ENCODE measurements at regions of chr16 and their contacts with region 1.

Region 1: GRCh38 chr16:68085259-68086071 is at the start of gene NFATC3:
- DNase-seq: peak; percentile 99
- H3K4me3 Mint-ChIP-seq: peak within 1 kb of the TSS; percentile 81
- H3K27ac Mint-ChIP-seq: peak within 1 kb of the TSS; percentile 95
- H3K4me1 Mint-ChIP-seq: peaks cover 64% of the 10 kb centered on the region
- H3K27me3 Mint-ChIP-seq: no peaks in the 10 kb centered on the region
- total RNA-seq, gene NFATC3: 49.1 to 50.3 TPM

Region 2: GRCh38 chr16:67561824-67562525 is 523.5 kb before region 1 on chr16:
- CTCF ChIA-PET with region 1: no interaction called
- intact Hi-C with region 1: loop called (anchors 1 kb)
- DNase-seq: peak; percentile 98
- H3K4me3 Mint-ChIP-seq: peak overlapping the region; percentile 78
- H3K27ac Mint-ChIP-seq: peak overlapping the region; percentile 86
- H3K4me1 Mint-ChIP-seq: peaks cover 45% of the 10 kb centered on the region
- H3K27me3 Mint-ChIP-seq: no peaks in the 10 kb centered on the region

Region 3: GRCh38 chr16:67935402-67936123 is 149.9 kb before region 1 on chr16:
- CTCF ChIA-PET with region 1: interaction called, 3 read pairs
- intact Hi-C with region 1: loop called (anchors 5 kb)
- DNase-seq: peak; percentile 98
- H3K4me3 Mint-ChIP-seq: peak overlapping the region; percentile 100
- H3K27ac Mint-ChIP-seq: peak overlapping the region; percentile 94
- H3K4me1 Mint-ChIP-seq: peaks cover 41% of the 10 kb centered on the region
- H3K27me3 Mint-ChIP-seq: no peaks in the 10 kb centered on the region

Region 4: GRCh38 chr16:68022704-68023522 is 62.6 kb before region 1 on chr16 and contains the starts of genes DDX28 and DUS2:
- CTCF ChIA-PET with region 1: no interaction called
- intact Hi-C with region 1: no loop called
- DNase-seq: peak; percentile 96
- H3K4me3 Mint-ChIP-seq: peak within 1 kb of the TSS; percentile 99
- H3K27ac Mint-ChIP-seq: peak within 1 kb of the TSS; percentile 94
- H3K4me1 Mint-ChIP-seq: peaks cover 38% of the 10 kb centered on the region
- H3K27me3 Mint-ChIP-seq: no peaks in the 10 kb centered on the region
- total RNA-seq, gene DDX28: 9.4 to 9.7 TPM
- total RNA-seq, gene DUS2: 22.9 to 25.2 TPM

Region 5: DNA sequence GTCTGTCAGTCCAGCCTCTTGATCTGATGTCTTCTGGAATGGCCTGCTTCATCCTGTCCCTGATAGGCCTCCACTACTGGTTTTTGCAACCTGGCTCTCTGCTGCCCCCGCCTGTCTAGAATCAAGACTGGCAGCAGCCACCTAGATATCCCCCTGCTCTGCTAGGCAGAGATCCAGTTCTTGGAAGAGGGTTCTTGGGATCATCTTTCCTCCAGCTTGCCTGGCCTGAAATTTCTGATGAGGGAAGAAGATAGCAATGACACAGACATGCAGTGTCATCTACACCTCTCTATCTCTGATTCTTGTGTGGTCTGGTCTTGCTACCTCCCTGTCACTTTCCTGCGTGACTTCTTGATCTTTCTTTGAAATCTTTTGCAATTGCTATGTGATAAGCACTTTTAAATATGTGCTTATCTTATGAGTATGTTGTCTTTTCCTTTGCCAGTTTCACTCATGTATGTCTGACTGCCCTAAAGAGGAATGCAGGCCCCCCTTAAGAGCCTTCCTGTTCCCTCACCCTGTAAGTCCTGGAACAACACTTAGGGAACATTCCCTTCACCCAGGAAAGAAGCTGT is 20.6 kb before region 1 on chr16:
- CTCF ChIA-PET with region 1: interaction called, 13 read pairs
- intact Hi-C with region 1: no loop called
- DNase-seq: peak; percentile 88
- H3K4me3 Mint-ChIP-seq: no peak overlapping the region
- H3K27ac Mint-ChIP-seq: no peak overlapping the region
- H3K4me1 Mint-ChIP-seq: peaks cover 61% of the 10 kb centered on the region
- H3K27me3 Mint-ChIP-seq: no peaks in the 10 kb centered on the region

Region 6: DNA sequence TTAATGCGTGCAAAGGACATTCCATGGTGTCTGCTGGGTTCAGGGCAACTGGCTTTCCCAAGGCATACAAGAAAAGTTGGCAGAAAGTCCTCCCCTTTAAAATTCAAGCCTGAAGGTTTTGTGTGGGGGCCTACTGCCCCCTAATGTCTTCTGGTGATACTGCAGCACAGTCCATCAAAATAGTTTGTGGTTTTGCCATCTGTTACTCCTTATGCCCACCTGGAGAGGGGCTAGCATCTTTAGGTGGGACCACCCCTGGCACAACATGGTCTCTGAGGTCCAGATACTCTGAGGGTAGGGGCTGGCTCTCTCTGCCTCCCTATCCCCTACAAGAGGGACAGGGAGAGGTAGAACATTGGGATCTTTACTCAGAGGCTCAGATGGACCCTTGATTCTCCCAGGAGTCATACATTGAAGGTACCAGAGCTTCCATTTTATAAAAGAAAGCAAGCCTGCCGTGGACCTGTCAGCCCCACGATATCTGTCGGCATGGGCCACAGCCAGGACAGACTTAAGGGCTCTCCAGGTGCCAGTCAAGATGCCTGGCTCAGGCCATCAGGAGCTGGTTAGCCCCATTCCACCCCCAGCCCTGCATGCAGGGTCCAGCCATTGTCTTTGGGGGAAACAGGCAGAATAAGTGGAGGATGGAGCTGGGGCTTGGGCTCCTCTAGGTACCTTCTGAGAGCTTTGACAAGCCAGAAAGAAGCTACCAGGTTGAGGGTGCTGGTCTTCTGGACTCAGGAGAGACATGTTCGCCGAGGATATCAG is 144.2 kb after region 1 on chr16:
- CTCF ChIA-PET with region 1: interaction called, 11 read pairs
- intact Hi-C with region 1: no loop called
- DNase-seq: peak; percentile 64
- H3K4me3 Mint-ChIP-seq: no peak overlapping the region
- H3K27ac Mint-ChIP-seq: peak overlapping the region; percentile 53
- H3K4me1 Mint-ChIP-seq: peaks cover 42% of the 10 kb centered on the region
- H3K27me3 Mint-ChIP-seq: no peaks in the 10 kb centered on the region

Region 7: DNA sequence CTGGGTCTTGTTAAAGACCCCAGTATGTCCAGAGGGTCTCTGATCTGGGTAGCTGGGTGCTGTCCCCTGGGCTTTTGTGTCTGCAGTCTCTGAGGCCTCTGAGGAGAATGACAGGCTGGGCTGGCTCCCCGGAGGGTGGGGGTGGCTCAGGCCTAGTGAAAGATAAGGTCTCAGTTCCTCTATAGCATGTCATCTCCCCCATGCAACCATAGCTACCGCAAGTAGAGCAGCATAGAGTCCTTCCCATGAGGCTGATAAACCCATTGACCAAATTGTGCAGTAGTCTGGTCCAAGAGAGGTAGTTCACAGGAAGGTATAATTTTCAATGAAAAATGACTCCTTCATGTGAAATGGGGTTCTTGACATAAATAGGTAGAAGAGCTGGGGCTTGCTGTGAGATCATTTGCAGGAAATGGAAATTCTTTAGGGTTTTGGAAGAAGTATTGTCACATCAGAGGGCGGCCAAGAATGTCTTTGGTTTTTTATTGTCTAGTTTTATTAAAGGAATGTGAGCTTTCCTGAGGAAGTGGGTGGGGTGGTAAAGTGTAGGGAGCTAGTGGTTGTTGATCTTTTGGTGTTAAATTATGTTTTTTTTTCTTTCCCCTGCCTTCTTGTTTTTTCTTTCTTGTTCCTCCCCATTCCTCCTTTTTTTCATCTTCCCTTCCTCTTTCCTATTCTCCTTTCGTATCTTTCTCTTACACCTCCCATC is 204.3 kb after region 1 on chr16:
- CTCF ChIA-PET with region 1: no interaction called
- intact Hi-C with region 1: loop called (anchors 5 kb)
- DNase-seq: peak; percentile 81
- H3K4me3 Mint-ChIP-seq: no peak overlapping the region
- H3K27ac Mint-ChIP-seq: peak overlapping the region; percentile 92
- H3K4me1 Mint-ChIP-seq: peaks cover 87% of the 10 kb centered on the region
- H3K27me3 Mint-ChIP-seq: no peaks in the 10 kb centered on the region

Region 8: GRCh38 chr16:68756250-68756915 is 670.9 kb after region 1 on chr16:
- CTCF ChIA-PET with region 1: no interaction called
- intact Hi-C with region 1: loop called (anchors 10 kb)
- DNase-seq: peak; percentile 93
- H3K4me3 Mint-ChIP-seq: peak overlapping the region; percentile 19
- H3K27ac Mint-ChIP-seq: peak overlapping the region; percentile 97
- H3K4me1 Mint-ChIP-seq: peaks cover 61% of the 10 kb centered on the region
- H3K27me3 Mint-ChIP-seq: no peaks in the 10 kb centered on the region